ENCODE measurements at regions of chr13 and their contacts with region 1.

Region 1: DNA sequence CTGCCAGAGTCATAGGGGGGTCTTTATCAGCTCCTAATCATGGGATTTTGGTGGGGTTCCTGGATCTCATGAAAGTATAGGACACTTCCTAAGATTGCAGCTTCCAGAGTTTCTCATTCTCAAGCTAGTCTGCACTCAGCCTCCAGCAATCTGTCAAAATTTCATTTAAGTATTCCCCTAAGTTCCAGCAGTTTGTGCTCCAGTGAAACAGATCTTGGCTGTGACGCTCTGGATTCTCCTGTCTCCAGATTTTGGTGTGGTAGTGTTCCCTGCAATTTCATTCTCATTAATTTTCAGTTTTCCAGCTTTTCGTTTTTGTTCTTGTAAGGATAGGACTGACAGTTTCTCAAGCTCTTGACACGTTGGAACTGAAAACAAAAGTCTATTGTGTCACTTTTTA is 908.9 kb upstream of the MIR17HG start:
- DNase-seq: no peak
- H3K4me3 ChIP-seq: no peak overlapping the region
- H3K27ac ChIP-seq: no peak overlapping the region
- H3K4me1 ChIP-seq: no peaks in the 10 kb centered on the region
- H3K27me3 ChIP-seq: no peaks in the 10 kb centered on the region
- CTCF ChIP-seq: no peak

Region 2: DNA sequence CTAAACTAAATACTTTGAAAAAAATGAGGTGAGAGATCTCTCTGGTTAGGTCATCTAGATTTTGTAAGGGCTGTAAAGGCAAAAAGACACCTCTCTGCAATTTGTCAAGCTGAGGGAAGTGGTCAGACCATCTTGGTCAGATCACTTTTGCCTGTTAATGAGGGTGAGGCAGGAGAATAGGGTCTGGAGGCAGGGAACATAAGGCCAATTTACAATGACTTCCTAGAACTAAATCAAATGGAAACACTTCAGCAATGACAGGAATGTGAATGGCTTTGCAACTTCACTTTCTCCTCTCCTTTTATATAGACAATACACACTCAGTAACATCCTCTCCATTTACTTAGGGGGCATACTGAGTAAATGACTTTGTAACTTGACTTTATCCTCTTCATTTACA is 1114.0 kb before region 1 on chr13:
- CTCF ChIA-PET with region 1: no interaction called
- POLR2A ChIA-PET with region 1: no interaction called
- intact Hi-C with region 1: no loop called
- DNase-seq: no peak
- H3K4me3 ChIP-seq: no peak overlapping the region
- H3K27ac ChIP-seq: no peak overlapping the region
- H3K4me1 ChIP-seq: no peaks in the 10 kb centered on the region
- H3K27me3 ChIP-seq: no peaks in the 10 kb centered on the region
- CTCF ChIP-seq: no peak

Region 3: DNA sequence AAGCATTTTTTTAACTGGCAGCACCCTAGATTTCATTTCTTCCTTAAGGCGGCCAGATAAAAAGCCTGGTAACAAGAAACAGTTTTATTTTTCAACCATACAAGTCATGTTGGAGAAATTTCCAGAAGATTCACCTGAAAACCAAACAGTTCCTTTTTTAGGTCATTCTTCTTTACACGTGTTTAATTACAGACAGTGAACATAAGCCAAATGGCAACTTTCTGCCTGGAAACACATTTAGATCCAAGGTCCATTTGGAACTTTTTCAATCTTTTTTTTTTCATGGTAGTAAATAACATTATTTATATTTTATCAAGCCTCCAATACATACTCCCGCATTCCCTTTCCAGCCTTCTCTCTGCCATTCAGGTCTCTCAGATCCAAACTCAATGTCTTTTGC is 22.8 kb after region 1 on chr13:
- CTCF ChIA-PET with region 1: no interaction called
- POLR2A ChIA-PET with region 1: interaction called, 12 read pairs
- intact Hi-C with region 1: no loop called
- DNase-seq: no peak
- H3K4me3 ChIP-seq: no peak overlapping the region
- H3K27ac ChIP-seq: no peak overlapping the region
- H3K4me1 ChIP-seq: no peaks in the 10 kb centered on the region
- H3K27me3 ChIP-seq: no peaks in the 10 kb centered on the region
- CTCF ChIP-seq: no peak

Region 4: DNA sequence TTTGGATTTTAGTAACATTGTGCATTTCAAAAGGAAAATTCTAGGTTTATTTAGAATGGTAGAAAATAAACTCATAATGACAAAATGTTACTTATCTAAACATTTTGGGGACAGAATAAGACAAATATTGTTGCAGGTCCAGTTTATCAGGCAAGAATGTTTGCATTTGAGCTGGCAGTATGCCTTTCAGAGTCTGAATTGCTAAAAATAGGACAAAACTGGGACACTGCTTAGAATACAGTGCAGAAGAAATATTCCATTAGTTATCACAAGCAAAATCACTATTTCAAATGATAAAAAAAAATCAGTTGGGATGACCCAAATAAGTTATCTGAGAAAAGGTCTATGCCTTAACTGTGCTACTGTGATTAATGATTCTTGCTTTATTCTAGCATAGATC is 38.6 kb after region 1 on chr13:
- CTCF ChIA-PET with region 1: no interaction called
- POLR2A ChIA-PET with region 1: no interaction called
- intact Hi-C with region 1: no loop called
- DNase-seq: no peak
- H3K4me3 ChIP-seq: no peak overlapping the region
- H3K27ac ChIP-seq: no peak overlapping the region
- H3K4me1 ChIP-seq: no peaks in the 10 kb centered on the region
- H3K27me3 ChIP-seq: no peaks in the 10 kb centered on the region
- CTCF ChIP-seq: no peak

Measured in PC-9 (cell line).